ENCODE measurements at regions of chr20 and their contacts with region 1.

Region 1: GRCh38 chr20:50115591-50116372 is 2.8 kb upstream of the UBE2V1 start:
- DNase-seq: peak; percentile 87
- ATAC-seq: peak; percentile 77
- H3K4me3 ChIP-seq: peak overlapping the region; percentile 54 to 78 (median 64)
- H3K4me3 Mint-ChIP-seq: peak overlapping the region; percentile 85
- H3K27ac ChIP-seq: peak overlapping the region; percentile 38 to 53
- H3K27ac Mint-ChIP-seq: peak overlapping the region; percentile 86
- H3K4me1 ChIP-seq: peaks cover 39 to 40% of the 10 kb centered on the region in 2 donors
- H3K4me1 Mint-ChIP-seq: peaks cover 56% of the 10 kb centered on the region
- H3K27me3 ChIP-seq: no peaks in the 10 kb centered on the region
- H3K27me3 Mint-ChIP-seq: no peaks in the 10 kb centered on the region
- CTCF ChIP-seq: no peak

Region 2: DNA sequence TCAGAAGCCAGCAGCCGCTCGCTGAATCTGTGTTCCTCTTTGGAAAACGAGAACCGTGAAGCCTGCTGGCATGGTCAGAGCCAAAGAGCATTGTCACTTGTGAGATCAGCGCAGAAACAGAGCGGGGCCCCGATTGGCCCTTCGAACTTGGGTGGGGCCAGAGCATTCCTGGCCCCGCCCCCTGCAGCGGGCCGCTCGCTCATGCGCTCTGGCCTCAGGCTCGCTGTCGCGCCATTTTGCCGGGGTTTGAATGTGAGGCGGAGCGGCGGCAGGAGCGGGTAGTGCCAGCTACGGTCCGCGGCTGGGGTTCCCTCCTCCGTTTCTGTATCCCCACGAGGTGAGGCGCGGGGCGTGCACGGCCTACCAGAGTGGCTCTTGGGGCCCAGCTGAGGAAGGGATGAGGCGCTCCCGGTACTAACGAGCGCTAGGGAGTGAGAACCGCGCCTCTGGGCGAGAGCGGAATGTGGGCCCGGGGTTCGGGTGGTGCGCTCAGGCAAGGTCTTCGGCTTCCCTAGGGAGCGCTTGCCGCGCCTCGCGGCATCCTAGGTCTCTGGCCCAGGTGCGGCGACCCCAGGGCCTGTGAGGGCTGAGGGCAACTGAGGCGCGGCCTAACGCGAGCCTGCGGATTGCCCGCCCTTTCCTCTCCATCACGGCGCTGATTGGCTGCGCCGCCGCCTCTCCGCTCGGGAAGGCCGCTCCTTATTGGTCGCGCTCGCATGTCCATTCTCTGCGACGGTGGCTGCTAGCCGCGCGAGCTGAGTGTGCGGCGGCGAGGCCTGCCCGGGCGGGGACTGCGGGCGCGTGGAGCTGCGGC is 1069.5 kb before region 1 on chr20 and contains the start of gene CSE1L:
- CTCF ChIA-PET with region 1: no interaction called
- POLR2A ChIA-PET with region 1: no interaction called
- intact Hi-C with region 1: loop called (anchors 2 kb)
- DNase-seq: peak; percentile 97
- ATAC-seq: peak; percentile 85
- H3K4me3 ChIP-seq: peak within 1 kb of the TSS; percentile 83 to 100 (median 99)
- H3K4me3 Mint-ChIP-seq: peak within 1 kb of the TSS; percentile 96
- H3K27ac ChIP-seq: peak within 1 kb of the TSS; percentile 78 to 97
- H3K27ac Mint-ChIP-seq: peak within 1 kb of the TSS; percentile 98
- H3K4me1 ChIP-seq: peaks cover 14 to 24% of the 10 kb centered on the region in 2 donors
- H3K4me1 Mint-ChIP-seq: peaks cover 28% of the 10 kb centered on the region
- H3K27me3 ChIP-seq: no peaks in the 10 kb centered on the region
- H3K27me3 Mint-ChIP-seq: no peaks in the 10 kb centered on the region
- CTCF ChIP-seq: no peak
- total RNA-seq, gene CSE1L: 38.0 and 38.5 TPM in 2 replicates

Region 3: GRCh38 chr20:49936153-49937027 is 179.4 kb before region 1 on chr20 and contains the start of gene RNF114:
- CTCF ChIA-PET with region 1: no interaction called
- POLR2A ChIA-PET with region 1: no interaction called
- intact Hi-C with region 1: loop called (anchors 1 kb)
- DNase-seq: peak; percentile 93
- ATAC-seq: peak; percentile 93
- H3K4me3 ChIP-seq: peak within 1 kb of the TSS; percentile 78 to 99 (median 94)
- H3K4me3 Mint-ChIP-seq: peak within 1 kb of the TSS; percentile 99
- H3K27ac ChIP-seq: peak within 1 kb of the TSS; percentile 89 to 90
- H3K27ac Mint-ChIP-seq: peak within 1 kb of the TSS; percentile 93
- H3K4me1 ChIP-seq: peaks cover 33 to 42% of the 10 kb centered on the region in 2 donors
- H3K4me1 Mint-ChIP-seq: peaks cover 49% of the 10 kb centered on the region
- H3K27me3 ChIP-seq: no peaks in the 10 kb centered on the region
- H3K27me3 Mint-ChIP-seq: no peaks in the 10 kb centered on the region
- CTCF ChIP-seq: no peak
- total RNA-seq, gene RNF114: 81.7 and 86.0 TPM in 2 replicates

Region 4: DNA sequence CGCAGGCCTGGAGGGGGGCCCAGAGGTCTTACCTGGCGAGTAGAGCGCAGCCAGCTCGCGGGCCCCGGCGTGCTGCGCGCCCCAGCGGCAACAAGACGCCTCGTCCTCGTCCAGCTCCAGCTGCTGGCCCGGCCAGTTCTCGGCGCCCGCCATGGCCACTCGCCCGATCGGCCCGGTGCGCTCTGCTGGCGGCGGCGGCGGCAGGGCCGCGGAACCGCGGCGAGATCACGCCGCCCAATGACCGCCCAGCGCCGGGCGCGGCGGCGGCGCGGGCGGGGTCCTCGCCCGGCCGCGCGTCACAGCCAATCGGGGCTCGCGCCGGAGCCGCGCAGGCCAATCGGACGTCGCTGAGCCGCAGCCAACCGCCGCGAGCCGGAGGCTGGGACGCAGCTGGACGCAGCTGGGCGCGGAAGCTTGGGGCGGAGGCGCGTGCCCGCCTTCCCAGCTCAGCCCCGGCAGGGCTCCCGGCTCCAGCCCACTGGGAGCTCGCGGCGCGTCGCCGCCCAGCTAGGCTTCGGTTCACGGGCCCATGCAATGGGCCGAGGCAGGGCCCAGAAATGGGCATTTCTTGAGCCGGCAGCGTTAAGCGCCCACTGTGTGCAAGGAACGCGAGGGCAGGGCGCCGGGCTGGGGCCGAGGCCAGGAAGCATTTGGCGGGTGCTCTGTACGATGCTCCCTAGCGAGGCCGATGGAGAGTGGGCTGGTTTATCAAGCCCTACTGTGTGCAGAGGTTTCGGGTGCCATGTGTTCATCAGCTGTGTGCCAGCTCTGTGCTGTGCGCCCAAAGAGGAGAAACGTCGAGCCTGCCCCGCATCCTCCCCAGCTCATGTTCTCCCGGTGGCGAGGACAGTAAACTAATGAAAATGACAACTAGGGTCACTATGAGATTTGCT is 37.9 kb after region 1 on chr20 and contains the start of gene PEDS1:
- CTCF ChIA-PET with region 1: interaction called, 39 read pairs
- POLR2A ChIA-PET with region 1: interaction called, 10 read pairs
- intact Hi-C with region 1: loop called (anchors 1 kb)
- DNase-seq: peak; percentile 89
- ATAC-seq: peak; percentile 98
- H3K4me3 ChIP-seq: peak within 1 kb of the TSS; percentile 71 to 96 (median 87)
- H3K4me3 Mint-ChIP-seq: peak within 1 kb of the TSS; percentile 77
- H3K27ac ChIP-seq: peak within 1 kb of the TSS; percentile 63 to 85
- H3K27ac Mint-ChIP-seq: peak within 1 kb of the TSS; percentile 86
- H3K4me1 ChIP-seq: peaks cover 18 to 24% of the 10 kb centered on the region in 2 donors
- H3K4me1 Mint-ChIP-seq: peaks cover 38% of the 10 kb centered on the region
- H3K27me3 ChIP-seq: no peaks in the 10 kb centered on the region
- H3K27me3 Mint-ChIP-seq: no peaks in the 10 kb centered on the region
- CTCF ChIP-seq: no peak
- total RNA-seq, gene PEDS1: 11.2 and 13.9 TPM in 2 replicates

Region 5: GRCh38 chr20:50179507-50180016 is 63.8 kb after region 1 on chr20:
- CTCF ChIA-PET with region 1: interaction called, 297 read pairs
- POLR2A ChIA-PET with region 1: no interaction called
- intact Hi-C with region 1: loop called (anchors 2 kb)
- DNase-seq: no peak
- ATAC-seq: peak; percentile 25
- H3K4me3 ChIP-seq: no peak overlapping the region
- H3K4me3 Mint-ChIP-seq: no peak overlapping the region
- H3K27ac ChIP-seq: no peak overlapping the region
- H3K27ac Mint-ChIP-seq: no peak overlapping the region
- H3K4me1 ChIP-seq: no peaks in the 10 kb centered on the region
- H3K4me1 Mint-ChIP-seq: no peaks in the 10 kb centered on the region
- H3K27me3 ChIP-seq: peaks cover 0 to under 1% (median 0%) of the 10 kb centered on the region in 4 experiments
- H3K27me3 Mint-ChIP-seq: peaks cover 9% of the 10 kb centered on the region
- CTCF ChIP-seq: peak; percentile 55

Measured in B cell (primary cell).